CD8-positive, alpha-beta T cell (primary cell): ENCODE measurements at regions of chr4 and their contacts with region 1.

Region 1: GRCh38 chr4:99144070-99144469 is at the start of gene ADH4:
- DNase-seq: no peak
- ATAC-seq: no peak
- H3K4me3 ChIP-seq: no peak within 1 kb of the TSS
- H3K4me3 Mint-ChIP-seq: no peak within 1 kb of the TSS
- H3K27ac ChIP-seq: no peak within 1 kb of the TSS
- H3K27ac Mint-ChIP-seq: no peak within 1 kb of the TSS
- H3K4me1 ChIP-seq: no peaks in the 10 kb centered on the region
- H3K4me1 Mint-ChIP-seq: no peaks in the 10 kb centered on the region
- H3K27me3 ChIP-seq: no peaks in the 10 kb centered on the region
- H3K27me3 Mint-ChIP-seq: no peaks in the 10 kb centered on the region
- CTCF ChIP-seq: no peak
- total RNA-seq, gene ADH4: not detected

Region 2: DNA sequence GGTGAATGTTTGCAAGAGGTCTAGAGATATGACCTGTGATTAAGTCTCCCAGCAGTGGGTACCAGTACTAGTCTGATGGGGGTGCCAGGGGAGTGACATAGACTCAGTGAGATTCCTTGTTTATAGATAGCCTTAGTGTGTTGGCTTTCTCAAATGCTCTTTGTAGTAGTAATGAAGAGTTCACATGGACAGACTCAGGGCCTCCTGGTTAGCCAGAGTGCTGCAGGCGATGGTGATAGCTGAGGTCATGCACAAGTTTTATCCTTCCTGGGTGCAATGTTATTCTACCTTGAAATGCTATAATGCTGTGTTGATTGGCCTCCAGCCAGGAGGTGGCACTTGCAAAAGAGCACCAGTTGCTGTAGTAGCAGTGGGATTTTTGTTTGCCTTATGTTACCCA is 35.5 kb after region 1 on chr4:
- CTCF ChIA-PET with region 1: no interaction called
- POLR2A ChIA-PET with region 1: no interaction called
- intact Hi-C with region 1: loop called in 1 of 2 experiments (anchors 1 kb)
- DNase-seq: no peak
- ATAC-seq: no peak
- H3K4me3 ChIP-seq: no peak overlapping the region
- H3K4me3 Mint-ChIP-seq: no peak overlapping the region
- H3K27ac ChIP-seq: no peak overlapping the region
- H3K27ac Mint-ChIP-seq: no peak overlapping the region
- H3K4me1 ChIP-seq: no peaks in the 10 kb centered on the region
- H3K4me1 Mint-ChIP-seq: no peaks in the 10 kb centered on the region
- H3K27me3 ChIP-seq: no peaks in the 10 kb centered on the region
- H3K27me3 Mint-ChIP-seq: peaks cover 3% of the 10 kb centered on the region
- CTCF ChIP-seq: no peak

Region 3: DNA sequence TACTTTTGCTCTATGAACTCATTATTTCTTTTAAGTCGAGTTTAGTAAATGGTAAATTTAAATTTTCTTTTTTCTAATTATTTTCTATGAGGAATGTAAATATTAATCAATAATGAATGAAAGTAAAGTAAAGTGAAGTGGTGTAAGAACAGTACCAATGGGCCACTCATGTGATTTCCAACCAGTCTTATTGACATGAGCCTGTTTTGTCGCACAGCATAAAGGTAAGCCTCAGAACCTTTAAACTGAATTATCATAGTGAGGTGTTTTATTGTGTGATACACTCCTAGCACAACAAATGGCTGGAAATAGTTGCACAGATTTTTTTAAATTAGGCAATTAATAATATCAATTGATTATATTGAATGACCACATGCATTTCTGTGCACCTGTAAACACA is 207.4 kb after region 1 on chr4:
- CTCF ChIA-PET with region 1: no interaction called
- POLR2A ChIA-PET with region 1: no interaction called
- intact Hi-C with region 1: no loop called
- DNase-seq: no peak
- ATAC-seq: no peak
- H3K4me3 ChIP-seq: no peak overlapping the region
- H3K4me3 Mint-ChIP-seq: no peak overlapping the region
- H3K27ac ChIP-seq: no peak overlapping the region
- H3K27ac Mint-ChIP-seq: no peak overlapping the region
- H3K4me1 ChIP-seq: no peaks in the 10 kb centered on the region
- H3K4me1 Mint-ChIP-seq: no peaks in the 10 kb centered on the region
- H3K27me3 ChIP-seq: peaks cover 0 to 4% of the 10 kb centered on the region in 2 experiments
- H3K27me3 Mint-ChIP-seq: peaks cover 12% of the 10 kb centered on the region
- CTCF ChIP-seq: no peak

Region 4: GRCh38 chr4:101066624-101067170 is 1922.6 kb after region 1 on chr4:
- CTCF ChIA-PET with region 1: no interaction called
- POLR2A ChIA-PET with region 1: no interaction called
- intact Hi-C with region 1: no loop called
- DNase-seq: no peak
- ATAC-seq: no peak
- H3K4me3 ChIP-seq: no peak overlapping the region
- H3K4me3 Mint-ChIP-seq: no peak overlapping the region
- H3K27ac ChIP-seq: no peak overlapping the region
- H3K27ac Mint-ChIP-seq: no peak overlapping the region
- H3K4me1 ChIP-seq: no peaks in the 10 kb centered on the region
- H3K4me1 Mint-ChIP-seq: no peaks in the 10 kb centered on the region
- H3K27me3 ChIP-seq: no peaks in the 10 kb centered on the region
- H3K27me3 Mint-ChIP-seq: no peaks in the 10 kb centered on the region
- CTCF ChIP-seq: no peak